ENCODE measurements at regions of chr11 and their contacts with region 1.

Region 1: GRCh38 chr11:119030329-119031049 is at the start of gene SLC37A4:
- DNase-seq: peak; percentile 85
- H3K4me3 ChIP-seq: peak within 1 kb of the TSS; percentile 90
- H3K27me3 ChIP-seq: no peaks in the 10 kb centered on the region
- CTCF ChIP-seq: peak; percentile 94
- polyA plus RNA-seq, gene SLC37A4: 14.1 and 21.4 TPM in 2 replicates

Region 2: GRCh38 chr11:118939953-118940598 is 90.4 kb before region 1 on chr11:
- CTCF ChIA-PET with region 1: no interaction called
- POLR2A ChIA-PET with region 1: no interaction called
- DNase-seq: no peak
- H3K4me3 ChIP-seq: no peak overlapping the region
- H3K27me3 ChIP-seq: peaks cover 2% of the 10 kb centered on the region
- CTCF ChIP-seq: no peak

Region 3: GRCh38 chr11:118975771-118976709 is 54.4 kb before region 1 on chr11:
- CTCF ChIA-PET with region 1: no interaction called
- POLR2A ChIA-PET with region 1: no interaction called
- DNase-seq: no peak
- H3K4me3 ChIP-seq: no peak overlapping the region
- H3K27me3 ChIP-seq: peaks cover 16% of the 10 kb centered on the region
- CTCF ChIP-seq: no peak

Region 4: GRCh38 chr11:119018074-119018938 is 12.2 kb before region 1 on chr11 and contains the starts of genes RPS25 and TRAPPC4:
- CTCF ChIA-PET with region 1: interaction called, 13 read pairs
- POLR2A ChIA-PET with region 1: no interaction called
- DNase-seq: peak; percentile 76
- H3K4me3 ChIP-seq: peak within 1 kb of the TSS; percentile 85
- H3K27me3 ChIP-seq: no peaks in the 10 kb centered on the region
- CTCF ChIP-seq: no peak
- polyA plus RNA-seq, gene RPS25: 351 and 799 TPM in 2 replicates
- polyA plus RNA-seq, gene TRAPPC4: 167 and 211 TPM in 2 replicates

Region 5: DNA sequence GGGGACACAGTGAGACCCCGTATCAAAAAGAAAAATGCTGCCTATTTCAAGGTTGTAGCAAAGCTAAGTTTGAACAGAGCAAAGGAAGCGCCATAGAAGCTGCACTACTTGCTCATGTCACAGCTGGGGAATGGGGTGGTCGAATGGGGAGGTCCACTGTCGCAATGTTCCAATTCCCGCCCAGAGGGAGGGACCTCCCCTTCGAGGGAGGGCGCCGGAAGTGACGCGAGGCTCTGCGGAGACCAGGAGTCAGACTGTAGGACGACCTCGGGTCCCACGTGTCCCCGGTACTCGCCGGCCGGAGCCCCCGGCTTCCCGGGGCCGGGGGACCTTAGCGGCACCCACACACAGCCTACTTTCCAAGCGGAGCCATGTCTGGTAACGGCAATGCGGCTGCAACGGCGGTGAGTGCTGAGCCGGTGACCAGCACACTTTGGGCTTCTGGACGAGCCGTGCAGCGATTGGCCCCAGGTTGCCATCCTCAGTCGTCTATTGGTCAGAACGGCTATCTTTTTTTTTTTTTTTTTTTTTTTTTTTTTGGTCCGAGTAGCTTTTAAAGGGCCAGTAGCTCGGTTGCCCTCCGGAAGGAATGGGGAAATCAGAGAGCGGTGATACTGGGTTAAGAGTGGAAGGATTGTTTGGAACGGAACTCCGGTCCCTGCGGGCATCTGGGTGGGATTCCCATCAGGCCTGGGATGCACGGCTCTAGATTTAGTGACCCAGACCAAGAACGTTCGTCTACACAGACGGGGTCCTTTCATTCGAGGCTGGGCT is 54.4 kb after region 1 on chr11 and contains the start of gene HMBS:
- CTCF ChIA-PET with region 1: no interaction called
- POLR2A ChIA-PET with region 1: no interaction called
- DNase-seq: peak; percentile 74
- H3K4me3 ChIP-seq: peak within 1 kb of the TSS; percentile 78
- H3K27me3 ChIP-seq: no peaks in the 10 kb centered on the region
- CTCF ChIP-seq: no peak
- polyA plus RNA-seq, gene HMBS: 38.4 and 54.9 TPM in 2 replicates